ENCODE measurements at regions of chr6 and their contacts with region 1.

Region 1: GRCh38 chr6:108848116-108848868 is at the start of gene ARMC2:
- DNase-seq: peak; percentile 85
- H3K4me3 Mint-ChIP-seq: peak within 1 kb of the TSS; percentile 81
- H3K27ac Mint-ChIP-seq: peak within 1 kb of the TSS; percentile 42
- H3K4me1 Mint-ChIP-seq: peaks cover 22% of the 10 kb centered on the region
- H3K27me3 Mint-ChIP-seq: peaks cover 28% of the 10 kb centered on the region
- total RNA-seq, gene ARMC2: 1.9 and 2.7 TPM in 2 replicates

Region 2: GRCh38 chr6:108835218-108835850 is 13.0 kb before region 1 on chr6:
- intact Hi-C with region 1: no loop called
- DNase-seq: peak; percentile 71
- H3K4me3 Mint-ChIP-seq: no peak overlapping the region
- H3K27ac Mint-ChIP-seq: no peak overlapping the region
- H3K4me1 Mint-ChIP-seq: peaks cover 26% of the 10 kb centered on the region
- H3K27me3 Mint-ChIP-seq: peaks cover 20% of the 10 kb centered on the region

Region 3: DNA sequence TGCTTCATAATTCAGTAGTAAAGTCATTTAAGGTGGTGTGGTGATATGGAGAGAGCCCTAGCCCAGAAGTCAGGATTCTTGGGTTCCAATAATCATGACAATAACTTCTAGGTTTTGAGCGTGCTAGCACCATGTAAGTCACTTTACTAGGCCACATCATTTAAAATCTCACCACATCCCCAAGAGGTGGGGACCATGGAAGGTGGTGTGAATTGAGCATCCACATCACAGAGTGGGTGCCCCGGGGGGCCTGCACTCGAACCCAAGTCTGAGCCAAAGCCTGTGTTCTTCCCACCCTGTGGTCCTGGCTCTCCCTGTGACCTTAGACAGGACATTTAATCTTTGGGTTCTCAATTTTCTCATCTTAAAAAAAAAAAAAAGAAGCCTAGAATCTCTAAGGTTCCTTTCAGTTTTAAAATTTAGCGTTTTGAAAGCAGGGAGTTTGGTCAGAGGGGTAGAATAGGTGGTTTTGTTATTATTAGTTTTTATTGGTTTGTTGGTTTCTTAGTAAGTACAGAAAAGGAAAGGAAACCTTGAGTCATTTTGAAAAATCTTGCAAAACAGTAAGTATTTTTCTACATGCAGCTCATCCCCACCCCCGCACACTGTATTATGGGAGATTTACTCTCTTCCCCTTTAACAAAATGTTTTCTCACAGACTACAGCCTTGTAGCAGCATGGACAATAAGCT is 26.3 kb after region 1 on chr6:
- intact Hi-C with region 1: loop called (anchors 1 kb)
- DNase-seq: peak; percentile 58
- H3K4me3 Mint-ChIP-seq: peak overlapping the region; percentile 47
- H3K27ac Mint-ChIP-seq: peak overlapping the region; percentile 81
- H3K4me1 Mint-ChIP-seq: peaks cover 53% of the 10 kb centered on the region
- H3K27me3 Mint-ChIP-seq: peaks cover 15% of the 10 kb centered on the region

Region 4: GRCh38 chr6:109095027-109095834 is 246.9 kb after region 1 on chr6 and contains the start of gene CEP57L1:
- intact Hi-C with region 1: loop called (anchors 1 kb)
- DNase-seq: peak; percentile 92
- H3K4me3 Mint-ChIP-seq: peak within 1 kb of the TSS; percentile 93
- H3K27ac Mint-ChIP-seq: peak within 1 kb of the TSS; percentile 99
- H3K4me1 Mint-ChIP-seq: peaks cover 45% of the 10 kb centered on the region
- H3K27me3 Mint-ChIP-seq: no peaks in the 10 kb centered on the region
- total RNA-seq, gene CEP57L1: 18.2 and 25.4 TPM in 2 replicates

Measured in activated T-helper 2 cell treated with anti-CD3 and anti-CD28 coated beads, Interferon-gamma antibody, Interleukin-2, Interleukin-4, amounts not matched to agents 10 μg/mL and 5 μg/mL and 100 μg/mL, durations not matched to agents 14 hours and 24 hours and 36 hours (primary cell).